ENCODE measurements at regions of chr2 and their contacts with region 1.

Region 1: DNA sequence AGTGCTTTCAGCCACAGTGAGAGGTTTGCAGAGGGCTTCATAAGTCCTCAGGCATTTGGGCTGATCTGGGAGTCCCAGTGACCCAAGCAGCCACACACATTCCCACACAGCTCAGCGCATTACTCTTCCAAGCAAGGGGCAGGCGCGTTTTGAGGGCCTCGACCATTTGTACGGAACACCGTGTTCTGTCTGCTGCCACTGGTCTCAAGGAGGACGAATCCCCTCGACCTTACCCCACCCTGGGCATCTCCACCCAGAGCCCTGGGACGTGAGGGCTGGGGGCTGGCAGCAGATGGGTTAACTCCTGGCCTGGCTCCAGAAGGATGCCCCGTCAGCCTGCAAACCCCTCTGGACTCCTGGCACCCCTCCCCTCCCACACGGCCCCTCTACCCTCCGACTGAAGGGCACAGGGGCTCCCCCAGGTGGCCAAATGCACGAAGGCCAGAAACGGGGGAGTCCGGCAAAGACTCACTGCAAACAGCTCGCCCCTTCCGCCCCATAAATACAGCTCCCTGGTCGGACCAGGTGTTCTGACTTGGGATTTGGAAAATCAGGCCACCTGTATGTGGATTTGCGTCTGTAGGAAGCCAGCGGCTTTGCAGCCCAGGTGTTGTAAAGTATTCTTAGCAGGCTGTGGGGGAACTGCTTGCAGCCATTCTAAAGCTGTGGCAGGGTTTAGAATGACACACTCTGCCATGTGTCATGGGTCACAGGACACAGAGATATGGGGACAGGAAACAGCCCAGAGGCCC is 33.6 kb upstream of the PTMA start:
- DNase-seq: peak; percentile 78 to 96
- H3K4me3 ChIP-seq: no peak overlapping the region
- H3K27ac ChIP-seq: 0 out of 2 replicates have a peak overlapping the region, but pooled peaks have one; percentile 20
- H3K4me1 ChIP-seq: peaks cover 0 to 39% (median 30%) of the 10 kb centered on the region in 4 experiments; a peak in 6 of 7 replicates
- H3K27me3 ChIP-seq: no peaks in the 10 kb centered on the region
- CTCF ChIP-seq: peak in 2 of 3 experiments; percentile 91 to 94; a peak in 3 of 4 replicates
- EP300 ChIP-seq: peak in 1 of 2 experiments; percentile 23; a peak in 1 of 3 replicates
- POLR2A ChIP-seq: no peak
- RAD21 ChIP-seq: peak; percentile 80 to 89

Region 2: DNA sequence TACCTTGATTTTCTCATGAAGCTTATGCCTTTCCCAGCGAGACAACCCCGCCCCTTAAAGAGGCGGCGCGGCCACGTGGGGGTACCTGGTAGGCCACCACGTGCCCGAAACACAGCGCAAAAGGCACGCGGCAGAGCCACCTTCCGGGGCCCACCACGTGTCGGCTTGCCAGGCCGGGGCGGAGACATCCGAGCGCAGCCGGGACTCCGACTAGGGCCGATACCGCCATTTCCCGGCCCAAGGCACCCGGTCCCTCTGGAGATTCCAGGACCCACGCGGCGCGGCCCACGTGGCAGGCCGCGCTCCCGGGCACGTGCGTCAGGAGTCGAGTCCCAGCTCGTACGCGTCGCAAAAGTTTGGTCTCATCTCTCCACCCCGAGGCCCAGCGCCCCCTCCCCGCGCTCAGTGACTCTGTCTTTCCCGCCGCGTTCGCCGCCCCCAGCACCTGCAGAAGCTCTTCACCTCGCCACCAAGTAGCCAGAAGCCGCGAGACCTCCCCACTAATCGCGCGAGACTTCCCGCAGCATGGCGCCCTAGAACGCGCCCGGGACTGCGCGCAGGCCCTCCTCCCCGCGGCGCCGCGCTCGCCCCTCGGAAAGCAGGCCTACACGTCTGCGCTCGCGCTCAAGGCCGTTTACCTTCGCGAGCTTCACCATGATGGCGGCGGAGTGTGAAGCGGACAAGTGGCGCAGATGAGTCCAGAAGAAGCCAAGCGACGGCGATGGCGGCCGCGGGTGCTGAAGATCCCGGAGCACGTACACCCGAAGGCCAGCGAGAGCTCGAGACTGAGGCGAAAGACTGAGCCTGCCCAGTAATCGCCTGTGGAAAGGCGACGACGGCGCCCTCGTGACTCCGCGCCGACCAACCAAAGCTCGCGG is 210.8 kb before region 1 on chr2 and contains the start of gene NCL:
- CTCF ChIA-PET with region 1: no interaction called
- POLR2A ChIA-PET with region 1: interaction called, 14 read pairs
- DNase-seq: no peak
- H3K4me3 ChIP-seq: peak within 1 kb of the TSS; percentile 85 to 97 (median 94)
- H3K27ac ChIP-seq: peak within 1 kb of the TSS; percentile 99
- H3K4me1 ChIP-seq: peaks cover 0 to 20% (median 6%) of the 10 kb centered on the region in 4 experiments; a peak in 6 of 7 replicates
- H3K27me3 ChIP-seq: no peaks in the 10 kb centered on the region
- CTCF ChIP-seq: no peak
- EP300 ChIP-seq: no peak
- POLR2A ChIP-seq: peak; percentile 98 to 99
- RAD21 ChIP-seq: no peak
- total RNA-seq, gene NCL: 1,442 and 1,478 TPM in 2 replicates

Region 3: GRCh38 chr2:231604685-231605606 is 69.8 kb before region 1 on chr2:
- CTCF ChIA-PET with region 1: interaction called, 513 read pairs
- POLR2A ChIA-PET with region 1: interaction called, 223 read pairs
- DNase-seq: peak; percentile 93 to 99
- H3K4me3 ChIP-seq: peak overlapping the region; percentile 25 to 56 (median 30); a peak in 7 of 8 replicates
- H3K27ac ChIP-seq: peak overlapping the region; percentile 94
- H3K4me1 ChIP-seq: peaks cover 6 to 29% (median 21%) of the 10 kb centered on the region in 4 experiments
- H3K27me3 ChIP-seq: no peaks in the 10 kb centered on the region
- CTCF ChIP-seq: no peak
- EP300 ChIP-seq: peak in 1 of 2 experiments; percentile 30; a peak in 1 of 3 replicates
- POLR2A ChIP-seq: peak in 1 of 2 experiments; percentile 83; a peak in 1 of 3 replicates
- RAD21 ChIP-seq: peak in 1 of 2 experiments; percentile 18; a peak in 2 of 4 replicates

Region 4: DNA sequence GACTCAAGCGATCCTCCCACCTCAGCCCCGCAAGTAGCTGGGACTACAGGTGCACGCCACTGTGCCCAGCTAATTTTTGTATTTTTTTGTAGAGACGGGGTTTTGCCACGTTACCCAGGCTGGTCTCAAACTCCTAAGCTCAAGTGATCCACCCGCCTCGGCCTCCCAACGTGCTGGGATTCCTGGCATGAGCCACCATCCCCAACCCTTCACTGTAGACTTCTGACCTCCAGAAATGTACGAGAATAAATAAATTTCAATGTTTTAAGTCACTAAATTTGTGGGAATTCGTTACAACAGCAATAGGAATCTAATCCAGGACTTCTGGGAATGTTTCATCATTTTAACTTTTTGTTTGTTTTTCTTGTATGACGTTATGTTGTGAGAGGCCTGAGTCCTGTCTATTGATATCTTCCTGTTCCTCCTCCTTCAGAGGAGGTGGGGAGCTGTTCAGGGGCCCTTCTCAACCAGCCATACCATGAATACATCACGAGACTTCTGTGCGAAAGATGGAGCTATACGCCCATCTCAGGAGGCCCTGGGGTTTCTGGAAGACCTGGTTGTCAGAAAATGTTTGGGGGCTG is 42.1 kb before region 1 on chr2:
- CTCF ChIA-PET with region 1: interaction called, 179 read pairs
- POLR2A ChIA-PET with region 1: interaction called, 6 read pairs
- DNase-seq: no peak
- H3K4me3 ChIP-seq: no peak overlapping the region
- H3K27ac ChIP-seq: no peak overlapping the region
- H3K4me1 ChIP-seq: peaks cover 0 to 6% (median 3%) of the 10 kb centered on the region in 4 experiments; a peak in 4 of 7 replicates
- H3K27me3 ChIP-seq: no peaks in the 10 kb centered on the region
- CTCF ChIP-seq: no peak
- EP300 ChIP-seq: no peak
- POLR2A ChIP-seq: no peak
- RAD21 ChIP-seq: no peak

Region 5: GRCh38 chr2:231655897-231656296 is 18.9 kb before region 1 on chr2:
- CTCF ChIA-PET with region 1: interaction called, 163 read pairs
- POLR2A ChIA-PET with region 1: interaction called, 100 read pairs
- DNase-seq: no peak
- H3K4me3 ChIP-seq: no peak overlapping the region
- H3K27ac ChIP-seq: no peak overlapping the region
- H3K4me1 ChIP-seq: peaks cover 6 to 9% (median 8%) of the 10 kb centered on the region in 4 experiments
- H3K27me3 ChIP-seq: peaks cover 0 to 7% (median under 1%) of the 10 kb centered on the region in 4 experiments; a peak in 5 of 7 replicates
- CTCF ChIP-seq: no peak
- EP300 ChIP-seq: no peak
- POLR2A ChIP-seq: no peak
- RAD21 ChIP-seq: no peak

Region 6: DNA sequence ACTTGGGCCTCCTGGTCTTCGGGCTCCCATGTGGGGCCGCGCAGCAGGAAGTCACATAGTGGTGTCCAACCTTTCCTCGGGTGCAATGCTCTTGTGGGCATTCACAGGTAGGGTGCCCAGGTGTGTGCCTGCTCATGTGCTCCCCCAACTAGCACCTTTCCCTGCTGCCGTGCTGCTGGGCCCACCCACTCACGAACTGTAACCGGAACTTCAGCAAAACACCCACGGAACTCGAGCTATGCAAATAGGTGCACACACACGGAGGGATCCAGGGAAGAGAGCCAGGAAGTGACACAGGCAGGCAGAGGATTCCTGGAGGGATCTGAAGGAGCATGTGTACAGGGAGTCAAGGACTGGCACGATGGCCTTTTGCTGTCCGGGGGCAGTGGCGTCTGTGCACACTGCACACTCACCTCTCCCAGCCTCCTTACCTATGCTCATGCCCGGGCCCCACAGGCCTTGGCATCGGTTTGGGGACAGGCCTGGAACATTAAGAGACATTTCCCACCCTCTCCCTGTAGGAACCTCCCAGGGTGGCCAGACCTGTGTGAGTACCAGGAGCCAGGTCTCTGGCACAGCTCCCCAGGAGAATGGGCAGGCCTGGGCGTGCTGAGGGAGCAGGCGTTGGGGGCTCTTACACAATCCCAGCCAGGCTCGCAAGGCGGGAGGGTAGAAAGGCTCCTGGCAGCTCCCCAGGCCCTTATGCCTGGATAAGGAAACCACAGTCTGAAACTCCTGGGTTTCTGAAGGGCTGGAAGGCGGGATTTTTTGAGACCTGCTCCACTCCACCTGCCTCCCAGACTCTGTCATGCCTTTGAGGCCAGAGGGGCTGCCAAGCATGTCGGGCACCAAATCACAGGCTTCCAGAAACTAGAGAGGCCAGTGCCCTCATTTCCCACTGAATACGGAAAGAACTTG is 27.0 kb after region 1 on chr2:
- CTCF ChIA-PET with region 1: interaction called, 66 read pairs
- POLR2A ChIA-PET with region 1: interaction called, 1,080 read pairs
- DNase-seq: no peak
- H3K4me3 ChIP-seq: no peak overlapping the region
- H3K27ac ChIP-seq: no peak overlapping the region; the same call in 1 of the 2 replicates
- H3K4me1 ChIP-seq: peaks cover 0 to 10% (median 3%) of the 10 kb centered on the region in 4 experiments; a peak in 5 of 7 replicates
- H3K27me3 ChIP-seq: no peaks in the 10 kb centered on the region
- CTCF ChIP-seq: no peak
- EP300 ChIP-seq: no peak
- POLR2A ChIP-seq: no peak
- RAD21 ChIP-seq: no peak

Region 7: GRCh38 chr2:231720987-231721966 is 46.5 kb after region 1 on chr2:
- CTCF ChIA-PET with region 1: interaction called, 555 read pairs
- POLR2A ChIA-PET with region 1: interaction called, 1,080 read pairs
- DNase-seq: no peak
- H3K4me3 ChIP-seq: no peak overlapping the region
- H3K27ac ChIP-seq: no peak overlapping the region
- H3K4me1 ChIP-seq: peaks cover 0 to 7% (median 3%) of the 10 kb centered on the region in 4 experiments; a peak in 2 of 7 replicates
- H3K27me3 ChIP-seq: no peaks in the 10 kb centered on the region
- CTCF ChIP-seq: peak in 1 of 3 experiments; percentile 3; a peak in 1 of 4 replicates
- EP300 ChIP-seq: no peak
- POLR2A ChIP-seq: no peak
- RAD21 ChIP-seq: no peak